Posterior vena cava (tissue), 2 donors: ENCODE measurements at regions of chrX and their contacts with region 1.

Region 1: GRCh38 chrX:124720532-124720931 is 374.2 kb downstream of the SH2D1A start:
- DNase-seq: no peak

Region 2: GRCh38 chrX:124747299-124747698 is 26.8 kb after region 1 on chrX:
- intact Hi-C with region 1: no loop called
- DNase-seq: no peak

Region 3: DNA sequence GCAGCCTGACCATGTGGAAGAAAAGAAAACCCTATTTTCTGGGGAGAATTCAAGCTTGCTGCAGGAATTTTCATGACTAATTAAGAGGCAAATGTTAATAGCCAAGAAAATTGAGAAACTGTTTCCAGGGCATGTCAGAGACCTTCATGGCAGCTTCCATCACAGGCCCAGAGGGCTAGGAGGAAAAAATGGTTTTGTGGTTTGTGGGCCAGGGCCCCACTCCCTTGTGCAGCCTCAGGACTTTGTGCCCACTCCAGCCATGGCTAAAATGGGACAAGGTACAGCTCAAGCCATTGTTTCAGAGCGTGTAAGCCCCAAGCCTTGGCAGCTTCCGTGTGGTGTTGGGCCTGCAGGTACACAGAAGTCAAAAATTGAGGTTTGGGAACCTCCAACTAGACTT is 1162.6 kb after region 1 on chrX:
- intact Hi-C with region 1: loop called in 1 of 2 experiments (anchors 5 kb)
- DNase-seq: peak; percentile 43